Posterior vena cava (tissue), 2 donors: ENCODE measurements at regions of chr10 and their contacts with region 1.

Region 1: DNA sequence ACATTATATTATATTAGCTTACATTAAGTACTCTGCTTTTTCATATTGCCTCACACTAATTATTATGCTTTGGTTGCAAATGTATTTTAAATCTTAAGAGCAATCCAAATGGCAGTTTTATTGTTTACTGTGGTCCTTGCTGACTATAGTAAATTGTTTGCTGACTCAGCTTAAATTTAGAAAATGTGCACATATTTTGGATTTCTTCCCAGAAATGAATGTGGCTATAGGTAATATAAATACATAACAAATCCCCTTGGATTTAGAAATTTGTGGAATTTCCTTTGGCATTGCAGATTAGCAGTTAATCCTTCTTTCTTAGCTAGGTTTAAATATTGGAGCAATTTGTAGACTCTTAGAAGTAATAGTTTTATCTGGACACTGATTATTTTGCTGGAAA is 565.8 kb downstream of the NRG3 start:
- DNase-seq: no peak

Region 2: GRCh38 chr10:82068501-82068900 is 372.3 kb before region 1 on chr10:
- intact Hi-C with region 1: loop called in 1 of 2 experiments (anchors 5 kb)
- DNase-seq: no peak

Region 3: GRCh38 chr10:82683931-82684340 is 243.2 kb after region 1 on chr10:
- intact Hi-C with region 1: no loop called
- DNase-seq: no peak